Gastrocnemius medialis (tissue), 4 donors: ENCODE measurements at regions of chr1 and their contacts with region 1.

Region 1: DNA sequence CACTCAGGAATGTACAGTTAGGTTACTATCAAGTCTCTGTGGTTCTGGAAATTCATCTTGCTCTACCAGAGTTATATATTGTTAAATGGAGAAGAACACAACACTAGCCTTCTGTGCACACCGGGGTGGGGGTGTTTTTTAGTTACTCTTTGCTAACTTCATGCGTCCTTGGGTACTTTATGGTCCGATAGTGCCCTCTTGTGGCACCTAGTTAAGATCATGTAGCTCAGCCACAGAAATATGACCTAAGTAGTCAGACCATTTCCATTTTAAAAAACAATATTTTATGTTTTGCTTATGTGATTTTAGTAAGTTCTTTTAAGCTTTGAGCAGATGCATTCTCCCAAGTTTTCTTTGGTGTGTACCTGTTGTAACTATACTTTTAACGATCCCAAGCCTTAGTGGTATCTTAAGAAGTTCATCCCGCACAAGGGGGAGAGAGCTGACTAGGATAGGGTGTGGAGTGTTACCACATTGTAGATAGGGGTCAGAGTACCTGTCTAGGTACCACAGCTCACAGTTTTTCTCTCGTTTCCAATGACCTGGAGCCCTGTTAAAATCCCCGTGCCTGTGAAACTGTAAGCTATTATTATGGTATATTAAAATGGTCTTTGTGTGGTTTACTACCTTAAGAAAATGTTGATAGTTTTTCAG is 20.6 kb upstream of the SH3D21 start:
- DNase-seq: peak; percentile 73 to 74
- ATAC-seq: peak; percentile 71 to 83
- H3K4me3 ChIP-seq: peak overlapping the region in 2 of 4 donors; percentile 12 to 31
- H3K27ac ChIP-seq: peak overlapping the region; percentile 89 to 92 (median 90)
- H3K4me1 ChIP-seq: peaks cover 92 to 97% of the 10 kb centered on the region in 2 donors
- H3K27me3 ChIP-seq: no peaks in the 10 kb centered on the region
- CTCF ChIP-seq: peak; percentile 69 to 85 (median 80)
- POLR2A ChIP-seq: no peak

Region 2: GRCh38 chr1:36099681-36100341 is 185.8 kb before region 1 on chr1:
- in situ Hi-C with region 1: loop called in 1 of 4 experiments (anchors 10 kb)
- intact Hi-C with region 1: loop called (anchors 10 kb)
- DNase-seq: peak; percentile 25 to 64
- ATAC-seq: peak; percentile 83 to 93
- H3K4me3 ChIP-seq: no peak overlapping the region
- H3K27ac ChIP-seq: no peak overlapping the region
- H3K4me1 ChIP-seq: no peaks in the 10 kb centered on the region
- H3K27me3 ChIP-seq: no peaks in the 10 kb centered on the region
- CTCF ChIP-seq: peak; percentile 64 to 90 (median 86)
- POLR2A ChIP-seq: no peak

Region 3: DNA sequence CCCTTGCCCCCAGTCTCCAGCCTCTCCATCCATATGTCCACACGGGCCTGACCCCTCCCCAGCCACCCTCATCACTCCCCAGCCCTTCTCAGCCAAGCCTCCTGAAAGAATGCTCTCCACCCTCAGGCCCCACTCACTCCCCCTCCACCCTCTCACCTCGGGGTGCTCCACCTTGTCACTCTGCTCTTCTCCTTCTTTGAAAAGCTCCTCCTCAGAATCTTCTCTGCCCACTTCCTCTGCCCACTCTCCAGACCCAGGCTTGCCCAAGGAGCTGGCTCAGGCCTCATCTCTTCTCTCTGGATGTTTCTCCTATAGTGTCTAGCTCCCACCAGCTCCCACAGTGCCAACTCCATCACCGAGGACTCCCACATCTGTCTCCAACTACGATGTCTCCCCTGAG is 174.4 kb before region 1 on chr1:
- in situ Hi-C with region 1: no loop called
- intact Hi-C with region 1: no loop called
- DNase-seq: no peak
- ATAC-seq: no peak
- H3K4me3 ChIP-seq: no peak overlapping the region
- H3K27ac ChIP-seq: no peak overlapping the region
- H3K4me1 ChIP-seq: no peaks in the 10 kb centered on the region
- H3K27me3 ChIP-seq: no peaks in the 10 kb centered on the region
- CTCF ChIP-seq: no peak
- POLR2A ChIP-seq: no peak

Region 4: DNA sequence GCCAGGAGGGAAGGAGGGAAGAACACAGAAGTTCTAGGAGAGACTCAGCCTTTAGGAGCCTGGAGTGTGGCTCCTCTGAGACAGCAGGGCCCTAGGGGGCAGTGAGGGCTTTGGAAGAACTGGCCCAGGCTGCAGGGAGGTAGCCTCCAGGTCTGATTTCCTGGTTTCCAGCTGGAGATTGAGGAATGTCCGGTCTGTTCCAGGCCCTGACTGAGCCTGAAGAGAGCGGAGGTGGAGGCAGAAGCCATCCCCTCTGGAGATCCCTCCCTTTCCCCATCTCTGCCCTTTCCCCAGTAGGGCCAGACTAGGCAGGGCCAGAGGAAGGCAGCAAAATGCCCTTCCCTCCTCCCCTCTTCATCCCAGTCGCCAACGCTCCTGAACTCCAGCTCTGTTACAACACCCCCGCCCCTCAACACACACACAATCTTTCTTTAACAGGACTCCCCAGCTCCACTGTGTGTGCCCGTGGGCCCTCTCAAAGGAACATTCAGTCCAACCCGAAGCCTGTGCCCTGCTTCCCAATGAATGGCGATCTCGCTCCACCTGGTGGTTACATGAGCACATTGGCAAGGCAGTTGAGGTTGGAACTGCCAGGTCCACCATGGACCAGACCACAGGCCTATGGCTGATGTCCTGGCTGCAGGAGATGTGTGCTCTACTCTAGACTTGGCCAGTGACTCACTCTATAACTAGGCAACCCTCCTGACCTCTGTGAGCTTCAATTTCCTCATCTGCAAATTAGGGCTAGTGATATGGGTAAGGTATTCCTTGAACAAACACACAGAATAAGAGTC is 97.6 kb before region 1 on chr1:
- in situ Hi-C with region 1: loop called in 1 of 4 experiments (anchors 25 kb)
- intact Hi-C with region 1: no loop called
- DNase-seq: peak; percentile 90 to 94
- ATAC-seq: peak; percentile 93 to 95
- H3K4me3 ChIP-seq: no peak overlapping the region
- H3K27ac ChIP-seq: peak overlapping the region; percentile 86 to 92 (median 87)
- H3K4me1 ChIP-seq: peaks cover 16 to 17% of the 10 kb centered on the region in 2 donors
- H3K27me3 ChIP-seq: no peaks in the 10 kb centered on the region
- CTCF ChIP-seq: peak; percentile 88 to 95 (median 92)
- POLR2A ChIP-seq: no peak

Region 5: DNA sequence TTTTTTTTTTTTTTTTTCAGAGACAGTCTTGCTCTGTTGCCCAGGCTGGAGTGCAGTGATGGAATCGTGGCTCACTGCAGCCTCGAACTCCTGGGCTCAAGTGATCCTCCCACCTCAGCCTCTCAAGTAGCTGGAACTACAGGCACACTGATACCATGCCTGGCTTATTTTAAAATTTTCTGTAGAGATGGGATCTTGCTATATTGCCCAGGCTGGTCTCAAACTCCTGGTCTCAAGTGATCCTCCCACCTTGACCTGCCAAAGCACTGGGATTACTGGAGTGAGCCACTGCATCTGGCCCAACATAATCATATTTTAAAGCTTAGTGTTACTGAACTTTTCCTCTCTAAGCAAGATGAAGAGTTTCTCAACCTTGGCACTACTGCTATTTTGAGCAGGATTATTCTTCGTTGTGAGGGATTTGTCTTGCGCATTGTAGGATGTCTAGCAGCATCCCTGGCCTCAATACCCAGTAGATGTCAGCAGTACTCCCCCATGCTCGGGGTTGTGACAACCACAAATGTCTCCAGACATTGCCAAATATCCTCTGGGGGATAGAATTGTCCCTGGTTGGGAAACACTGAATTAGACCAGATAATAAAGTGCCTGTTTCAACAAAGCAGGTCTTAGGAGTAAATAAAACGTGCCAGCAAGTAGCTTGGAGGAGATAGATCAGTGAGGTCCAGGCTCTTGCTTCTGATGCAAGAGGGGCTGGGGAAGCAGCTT is 76.4 kb before region 1 on chr1:
- in situ Hi-C with region 1: loop called in 1 of 4 experiments (anchors 10 kb)
- intact Hi-C with region 1: loop called (anchors 2 kb)
- DNase-seq: peak; percentile 38 to 74
- ATAC-seq: peak; percentile 66 to 73
- H3K4me3 ChIP-seq: peak overlapping the region in 2 of 4 donors; percentile 50 to 52
- H3K27ac ChIP-seq: peak overlapping the region; percentile 80 to 96 (median 91)
- H3K4me1 ChIP-seq: peaks cover 37 to 55% of the 10 kb centered on the region in 2 donors
- H3K27me3 ChIP-seq: no peaks in the 10 kb centered on the region
- CTCF ChIP-seq: peak in 1 of 5 experiments; percentile 3
- POLR2A ChIP-seq: no peak

Region 6: DNA sequence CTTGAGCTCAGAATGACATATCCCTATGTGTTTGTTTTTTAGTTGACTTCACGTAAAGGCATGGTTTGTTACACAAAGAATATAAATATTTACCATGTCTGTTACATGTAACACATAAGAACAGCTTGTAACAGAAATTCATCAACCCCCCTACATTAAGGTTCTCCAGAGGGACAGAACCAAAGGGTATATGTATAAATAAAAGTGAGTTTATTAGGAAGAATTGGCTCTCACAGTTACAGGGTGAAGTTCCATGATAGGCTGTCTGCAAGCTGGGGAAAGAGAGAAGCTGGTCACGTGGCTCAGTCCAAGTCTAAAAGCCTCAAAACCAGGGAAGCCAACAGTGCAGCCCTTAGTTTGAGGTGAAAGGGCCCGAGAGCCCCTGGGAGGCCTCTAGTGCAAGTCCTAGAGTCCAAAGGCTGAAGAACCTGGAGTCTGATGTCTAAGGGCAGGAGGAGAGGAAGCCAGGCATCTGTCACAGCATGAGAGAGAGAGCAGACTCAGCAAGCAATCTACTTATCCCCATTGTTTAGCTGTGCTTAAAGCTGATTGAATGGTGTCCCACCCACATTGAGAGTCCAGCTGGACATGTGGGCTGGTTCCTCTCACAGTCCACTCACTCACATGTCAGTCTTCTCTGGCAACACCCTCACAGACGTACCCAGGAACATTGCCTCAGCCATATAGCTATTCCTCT is 45.5 kb before region 1 on chr1:
- in situ Hi-C with region 1: loop called in 1 of 4 experiments (anchors 10 kb)
- intact Hi-C with region 1: no loop called
- DNase-seq: peak in 1 of 2 donors; percentile 60
- ATAC-seq: peak; percentile 59 to 65
- H3K4me3 ChIP-seq: no peak overlapping the region
- H3K27ac ChIP-seq: peak overlapping the region; percentile 90 to 99 (median 98)
- H3K4me1 ChIP-seq: peaks cover 73 to 84% of the 10 kb centered on the region in 2 donors
- H3K27me3 ChIP-seq: no peaks in the 10 kb centered on the region
- CTCF ChIP-seq: no peak
- POLR2A ChIP-seq: no peak

Region 7: GRCh38 chr1:36846357-36846756 is 560.8 kb after region 1 on chr1:
- in situ Hi-C with region 1: no loop called
- intact Hi-C with region 1: no loop called
- DNase-seq: no peak
- ATAC-seq: no peak
- H3K4me3 ChIP-seq: no peak overlapping the region
- H3K27ac ChIP-seq: no peak overlapping the region
- H3K4me1 ChIP-seq: no peaks in the 10 kb centered on the region
- H3K27me3 ChIP-seq: peaks cover 3 to 19% (median 7%) of the 10 kb centered on the region in 3 donors
- CTCF ChIP-seq: no peak
- POLR2A ChIP-seq: no peak